ENCODE measurements at regions of chr5 and their contacts with region 1.

Region 1: DNA sequence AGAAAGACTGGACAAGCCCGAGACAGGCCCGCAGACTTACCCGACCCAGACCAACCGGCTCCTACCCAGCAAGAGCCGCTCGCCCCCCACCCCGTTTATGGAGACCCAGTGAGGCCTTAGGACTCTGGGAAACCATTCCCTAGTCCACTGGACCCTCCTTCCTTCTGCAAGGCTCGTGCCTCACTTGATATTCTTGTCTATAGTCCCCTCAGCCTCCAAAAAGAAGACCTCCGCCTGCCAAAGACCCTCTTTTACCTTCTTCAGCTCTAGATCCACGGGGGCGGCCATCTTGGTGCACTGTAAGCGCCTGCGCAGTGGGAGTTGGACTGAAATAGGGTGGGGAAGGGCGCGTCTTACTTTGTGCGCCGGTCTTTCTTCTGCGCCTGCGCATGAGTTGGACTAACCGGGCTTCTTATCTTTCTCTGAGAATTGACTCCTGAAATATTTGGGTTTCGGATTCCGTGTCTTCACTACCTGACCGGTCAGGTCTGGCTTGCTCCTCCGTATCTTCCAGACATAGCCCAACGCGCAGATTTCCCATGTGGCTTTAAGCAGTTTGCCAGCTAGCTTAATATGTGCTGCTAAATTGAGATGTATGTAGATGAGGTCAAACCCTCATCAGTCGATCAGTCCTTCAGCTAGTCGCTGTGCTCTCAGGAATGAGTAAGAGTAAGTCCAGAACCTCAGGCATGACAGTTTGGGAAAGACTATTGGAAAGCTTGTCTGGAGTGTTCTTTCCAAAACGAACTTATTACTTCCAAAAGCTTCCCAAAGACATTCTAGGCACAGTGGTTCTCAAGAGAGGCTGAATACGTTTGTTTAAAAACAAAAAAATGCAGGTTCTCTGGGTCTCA is at the start of gene PFDN1:
- DNase-seq: peak; percentile 77 to 97 (median 90)
- ATAC-seq: peak; percentile 100
- H3K4me3 ChIP-seq: peak within 1 kb of the TSS; percentile 73 to 87
- H3K4me3 Mint-ChIP-seq: peak within 1 kb of the TSS; percentile 99
- H3K27ac ChIP-seq: peak within 1 kb of the TSS; percentile 61 to 82
- H3K27ac Mint-ChIP-seq: peak within 1 kb of the TSS; percentile 98
- H3K4me1 ChIP-seq: peaks cover 14% of the 10 kb centered on the region
- H3K4me1 Mint-ChIP-seq: peaks cover 29% of the 10 kb centered on the region
- H3K27me3 ChIP-seq: no peaks in the 10 kb centered on the region
- H3K27me3 Mint-ChIP-seq: peaks cover 4% of the 10 kb centered on the region
- CTCF ChIP-seq: no peak
- total RNA-seq, gene PFDN1: 28.4 to 30.5 TPM

Region 2: GRCh38 chr5:140336388-140336787 is 33.4 kb after region 1 on chr5:
- CTCF ChIA-PET with region 1: no interaction called
- POLR2A ChIA-PET with region 1: no interaction called
- intact Hi-C with region 1: no loop called
- DNase-seq: no peak
- ATAC-seq: no peak
- H3K4me3 ChIP-seq: no peak overlapping the region
- H3K4me3 Mint-ChIP-seq: no peak overlapping the region
- H3K27ac ChIP-seq: no peak overlapping the region
- H3K27ac Mint-ChIP-seq: no peak overlapping the region
- H3K4me1 ChIP-seq: no peaks in the 10 kb centered on the region
- H3K4me1 Mint-ChIP-seq: no peaks in the 10 kb centered on the region
- H3K27me3 ChIP-seq: no peaks in the 10 kb centered on the region
- H3K27me3 Mint-ChIP-seq: no peaks in the 10 kb centered on the region
- CTCF ChIP-seq: no peak

Region 3: GRCh38 chr5:140346348-140347101 is 43.5 kb after region 1 on chr5 and contains the start of gene HBEGF:
- CTCF ChIA-PET with region 1: interaction called, 14 read pairs
- POLR2A ChIA-PET with region 1: interaction called, 4 read pairs
- intact Hi-C with region 1: loop called in 1 of 2 experiments (anchors 1 kb)
- DNase-seq: peak in 8 of 9 experiments; percentile 21 to 66 (median 50)
- ATAC-seq: peak; percentile 73
- H3K4me3 ChIP-seq: peak within 1 kb of the TSS; percentile 48 to 50
- H3K4me3 Mint-ChIP-seq: peak within 1 kb of the TSS; percentile 72
- H3K27ac ChIP-seq: no peak within 1 kb of the TSS
- H3K27ac Mint-ChIP-seq: no peak within 1 kb of the TSS
- H3K4me1 ChIP-seq: peaks cover 23% of the 10 kb centered on the region
- H3K4me1 Mint-ChIP-seq: peaks cover 33% of the 10 kb centered on the region
- H3K27me3 ChIP-seq: peaks cover 0 to 13% of the 10 kb centered on the region in 2 experiments
- H3K27me3 Mint-ChIP-seq: peaks cover 27% of the 10 kb centered on the region
- CTCF ChIP-seq: peak; percentile 41
- total RNA-seq, gene HBEGF: 0.30 to 0.50 TPM

Region 4: GRCh38 chr5:140357726-140358093 is 54.7 kb after region 1 on chr5:
- CTCF ChIA-PET with region 1: interaction called, 4 read pairs
- POLR2A ChIA-PET with region 1: no interaction called
- intact Hi-C with region 1: loop called in 1 of 2 experiments (anchors 5 kb)
- DNase-seq: peak; percentile 55 to 83 (median 67)
- ATAC-seq: peak; percentile 99
- H3K4me3 ChIP-seq: peak overlapping the region in 1 of 2 experiments; percentile 20
- H3K4me3 Mint-ChIP-seq: peak overlapping the region; percentile 64
- H3K27ac ChIP-seq: no peak overlapping the region
- H3K27ac Mint-ChIP-seq: no peak overlapping the region
- H3K4me1 ChIP-seq: peaks cover 9% of the 10 kb centered on the region
- H3K4me1 Mint-ChIP-seq: peaks cover 7% of the 10 kb centered on the region
- H3K27me3 ChIP-seq: no peaks in the 10 kb centered on the region
- H3K27me3 Mint-ChIP-seq: peaks cover 11% of the 10 kb centered on the region
- CTCF ChIP-seq: peak; percentile 77

Region 5: GRCh38 chr5:140488914-140489313 is 185.9 kb after region 1 on chr5:
- CTCF ChIA-PET with region 1: no interaction called
- POLR2A ChIA-PET with region 1: no interaction called
- intact Hi-C with region 1: no loop called
- DNase-seq: no peak
- ATAC-seq: no peak
- H3K4me3 ChIP-seq: no peak overlapping the region
- H3K4me3 Mint-ChIP-seq: no peak overlapping the region
- H3K27ac ChIP-seq: no peak overlapping the region
- H3K27ac Mint-ChIP-seq: no peak overlapping the region
- H3K4me1 ChIP-seq: no peaks in the 10 kb centered on the region
- H3K4me1 Mint-ChIP-seq: no peaks in the 10 kb centered on the region
- H3K27me3 ChIP-seq: no peaks in the 10 kb centered on the region
- H3K27me3 Mint-ChIP-seq: no peaks in the 10 kb centered on the region
- CTCF ChIP-seq: no peak

Region 6: DNA sequence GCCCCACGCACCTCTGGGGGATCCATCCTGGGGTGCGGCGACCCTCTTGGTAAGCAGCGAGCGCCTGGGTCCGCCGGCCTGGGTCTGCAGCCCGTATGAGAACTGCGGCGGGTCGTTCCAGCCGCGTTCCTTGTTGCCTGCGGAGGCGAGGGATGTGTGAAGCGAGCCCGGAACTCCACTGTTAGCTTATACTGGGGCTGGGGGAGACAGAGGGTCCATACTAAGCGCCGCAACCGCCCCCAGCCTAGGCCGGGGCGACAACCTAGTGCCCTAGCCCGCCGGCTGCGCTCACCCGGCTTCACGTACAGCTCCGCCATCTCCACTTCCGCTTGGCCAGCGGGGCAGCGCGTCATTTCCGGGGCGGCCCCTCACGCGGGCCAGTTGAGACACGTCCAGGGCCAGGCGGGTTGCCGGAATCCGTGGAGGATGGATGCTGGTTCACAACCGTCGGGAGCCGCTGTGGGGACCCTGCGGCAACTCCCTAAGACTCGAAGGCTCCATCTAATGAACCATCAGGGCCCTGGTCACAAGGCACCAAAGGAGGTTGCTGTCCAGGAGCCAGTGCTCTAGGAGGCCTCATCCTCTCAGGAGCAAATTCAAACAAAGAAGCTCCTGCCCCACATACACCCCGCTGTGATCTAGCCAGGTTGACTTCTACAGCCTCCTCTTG is 254.3 kb after region 1 on chr5 and contains the start of gene SRA1:
- CTCF ChIA-PET with region 1: no interaction called
- POLR2A ChIA-PET with region 1: no interaction called
- intact Hi-C with region 1: loop called (anchors 5 to 10 kb)
- DNase-seq: peak; percentile 53 to 90 (median 80)
- ATAC-seq: peak; percentile 83
- H3K4me3 ChIP-seq: peak within 1 kb of the TSS; percentile 87 to 97
- H3K4me3 Mint-ChIP-seq: peak within 1 kb of the TSS; percentile 91
- H3K27ac ChIP-seq: peak within 1 kb of the TSS; percentile 89 to 97
- H3K27ac Mint-ChIP-seq: peak within 1 kb of the TSS; percentile 96
- H3K4me1 ChIP-seq: peaks cover 28% of the 10 kb centered on the region
- H3K4me1 Mint-ChIP-seq: peaks cover 47% of the 10 kb centered on the region
- H3K27me3 ChIP-seq: no peaks in the 10 kb centered on the region
- H3K27me3 Mint-ChIP-seq: no peaks in the 10 kb centered on the region
- CTCF ChIP-seq: no peak
- total RNA-seq, gene SRA1: 33.7 to 37.2 TPM

Region 7: GRCh38 chr5:140764177-140765020 is 461.4 kb after region 1 on chr5:
- CTCF ChIA-PET with region 1: no interaction called
- POLR2A ChIA-PET with region 1: no interaction called
- intact Hi-C with region 1: no loop called
- DNase-seq: no peak
- ATAC-seq: no peak
- H3K4me3 ChIP-seq: no peak overlapping the region
- H3K4me3 Mint-ChIP-seq: no peak overlapping the region
- H3K27ac ChIP-seq: no peak overlapping the region
- H3K27ac Mint-ChIP-seq: no peak overlapping the region
- H3K4me1 ChIP-seq: no peaks in the 10 kb centered on the region
- H3K4me1 Mint-ChIP-seq: no peaks in the 10 kb centered on the region
- H3K27me3 ChIP-seq: no peaks in the 10 kb centered on the region
- H3K27me3 Mint-ChIP-seq: no peaks in the 10 kb centered on the region
- CTCF ChIP-seq: no peak